PC-9 (cell line): ENCODE measurements at regions of chr6 and their contacts with region 1.

Region 1: DNA sequence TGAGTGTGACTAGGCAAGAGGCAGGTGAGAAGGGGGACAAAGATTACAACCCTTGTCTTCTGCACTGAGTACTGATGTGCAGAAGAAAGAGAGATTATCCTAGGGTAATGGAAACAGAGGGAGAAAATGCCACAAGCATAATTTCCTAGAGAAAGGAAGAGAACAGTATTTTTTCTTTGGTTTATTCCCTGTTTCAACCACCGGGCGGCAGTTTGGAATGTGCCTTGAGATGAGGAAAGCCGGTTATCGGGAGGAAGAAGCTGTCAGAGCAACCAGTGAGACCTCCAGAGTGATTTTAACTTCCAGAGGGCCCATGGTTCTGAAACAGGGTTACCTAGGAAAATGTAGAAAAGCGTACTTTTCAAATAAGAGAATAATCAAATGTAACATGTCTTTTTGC is 121.4 kb downstream of the REV3L start:
- DNase-seq: peak in 1 of 2 experiments; percentile 12
- H3K4me3 ChIP-seq: no peak overlapping the region
- H3K27ac ChIP-seq: no peak overlapping the region
- H3K4me1 ChIP-seq: no peaks in the 10 kb centered on the region
- H3K27me3 ChIP-seq: no peaks in the 10 kb centered on the region
- CTCF ChIP-seq: peak; percentile 72

Region 2: GRCh38 chr6:110756817-110757216 is 604.8 kb before region 1 on chr6:
- CTCF ChIA-PET with region 1: no interaction called
- POLR2A ChIA-PET with region 1: no interaction called
- intact Hi-C with region 1: no loop called
- DNase-seq: no peak
- H3K4me3 ChIP-seq: no peak overlapping the region
- H3K27ac ChIP-seq: no peak overlapping the region
- H3K4me1 ChIP-seq: no peaks in the 10 kb centered on the region
- H3K27me3 ChIP-seq: no peaks in the 10 kb centered on the region
- CTCF ChIP-seq: no peak

Region 3: DNA sequence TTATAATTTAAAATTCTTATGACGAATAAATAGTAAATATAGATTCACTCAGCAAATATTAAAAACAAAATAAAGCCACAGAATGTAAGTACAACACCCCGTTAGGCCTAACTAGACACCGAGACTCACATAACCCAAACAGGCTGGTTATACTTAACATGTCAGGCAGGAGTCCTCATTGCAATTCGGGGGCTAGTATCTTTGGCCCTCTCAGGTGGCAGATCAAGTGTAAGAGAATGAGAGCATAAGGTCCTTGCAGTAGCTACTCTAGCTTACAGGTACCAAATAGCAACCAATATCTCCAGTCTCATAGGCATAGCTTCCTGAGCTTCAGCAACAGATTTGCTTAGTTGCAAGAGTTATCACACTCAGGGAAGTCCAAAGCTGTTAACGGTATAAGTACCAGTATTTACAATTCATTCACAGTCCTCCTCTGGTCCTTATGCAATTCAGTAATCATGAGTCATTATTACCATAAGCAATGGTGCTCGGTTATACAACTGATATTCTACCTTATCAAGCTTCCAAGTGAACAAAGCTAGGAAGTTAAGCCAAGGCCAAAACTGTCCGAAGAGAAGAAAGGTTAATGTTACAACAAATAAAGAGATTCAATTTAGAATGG is 101.2 kb after region 1 on chr6:
- CTCF ChIA-PET with region 1: no interaction called
- POLR2A ChIA-PET with region 1: interaction called, 14 read pairs
- intact Hi-C with region 1: no loop called
- DNase-seq: no peak
- H3K4me3 ChIP-seq: no peak overlapping the region
- H3K27ac ChIP-seq: no peak overlapping the region
- H3K4me1 ChIP-seq: peaks cover 3% of the 10 kb centered on the region; the same call in 1 of the 2 replicates
- H3K27me3 ChIP-seq: no peaks in the 10 kb centered on the region
- CTCF ChIP-seq: no peak

Region 4: GRCh38 chr6:111478749-111479148 is 117.1 kb after region 1 on chr6:
- CTCF ChIA-PET with region 1: interaction called, 11 read pairs
- POLR2A ChIA-PET with region 1: no interaction called
- intact Hi-C with region 1: loop called (anchors 5 kb)
- DNase-seq: peak in 1 of 2 experiments; percentile 45
- H3K4me3 ChIP-seq: no peak overlapping the region
- H3K27ac ChIP-seq: peak overlapping the region; percentile 48
- H3K4me1 ChIP-seq: peaks cover 49% of the 10 kb centered on the region
- H3K27me3 ChIP-seq: no peaks in the 10 kb centered on the region
- CTCF ChIP-seq: peak; percentile 57; the same call in 1 of the 2 replicates

Region 5: GRCh38 chr6:111642463-111643158 is 281.0 kb after region 1 on chr6:
- CTCF ChIA-PET with region 1: no interaction called
- POLR2A ChIA-PET with region 1: no interaction called
- intact Hi-C with region 1: loop called (anchors 2 kb)
- DNase-seq: peak; percentile 46 to 50
- H3K4me3 ChIP-seq: no peak overlapping the region
- H3K27ac ChIP-seq: no peak overlapping the region
- H3K4me1 ChIP-seq: no peaks in the 10 kb centered on the region
- H3K27me3 ChIP-seq: no peaks in the 10 kb centered on the region
- CTCF ChIP-seq: peak; percentile 71